ENCODE measurements at regions of chr1 and their contacts with region 1.

Region 1: DNA sequence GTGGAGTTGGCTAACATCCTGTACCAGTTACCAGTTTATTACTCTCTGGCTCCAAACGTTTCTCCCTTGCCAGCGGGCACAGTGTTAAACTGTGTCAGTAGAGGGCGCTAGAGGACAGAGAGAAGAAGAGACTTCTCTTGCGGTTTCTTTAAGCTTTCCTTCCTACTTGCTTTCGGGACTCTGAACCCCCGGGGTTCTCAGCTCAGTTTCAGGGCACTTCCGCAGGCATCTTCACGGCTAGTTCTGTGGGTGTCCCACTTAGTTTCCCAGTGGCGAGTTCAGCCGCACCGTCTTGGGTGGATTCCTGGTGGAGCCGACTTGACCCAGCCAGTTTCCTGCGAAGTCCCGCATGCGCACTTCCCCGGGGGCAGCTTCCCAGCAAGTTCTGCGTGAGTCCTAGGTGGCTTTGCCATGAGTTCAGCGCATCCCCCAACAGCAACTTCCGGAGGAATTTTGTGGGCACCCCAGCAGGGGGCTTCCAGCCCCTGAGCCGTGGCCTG is 37.9 kb upstream of the BTG2 start:
- DNase-seq: peak; percentile 86
- ATAC-seq: peak; percentile 58
- H3K4me3 Mint-ChIP-seq: peak overlapping the region; percentile 76
- H3K27ac Mint-ChIP-seq: no peak overlapping the region; the same call in 1 of the 2 replicates
- H3K4me1 Mint-ChIP-seq: peaks cover 11% of the 10 kb centered on the region
- H3K27me3 Mint-ChIP-seq: peaks cover 10% of the 10 kb centered on the region
- CTCF ChIP-seq: peak; percentile 85

Region 2: GRCh38 chr1:203046984-203047630 is 220.3 kb before region 1 on chr1:
- CTCF ChIA-PET with region 1: interaction called, 369 read pairs
- POLR2A ChIA-PET with region 1: no interaction called
- DNase-seq: no peak
- ATAC-seq: no peak
- H3K4me3 Mint-ChIP-seq: no peak overlapping the region
- H3K27ac Mint-ChIP-seq: no peak overlapping the region
- H3K4me1 Mint-ChIP-seq: peaks cover 20% of the 10 kb centered on the region
- H3K27me3 Mint-ChIP-seq: no peaks in the 10 kb centered on the region; the same call in 1 of the 2 replicates
- CTCF ChIP-seq: no peak

Region 3: DNA sequence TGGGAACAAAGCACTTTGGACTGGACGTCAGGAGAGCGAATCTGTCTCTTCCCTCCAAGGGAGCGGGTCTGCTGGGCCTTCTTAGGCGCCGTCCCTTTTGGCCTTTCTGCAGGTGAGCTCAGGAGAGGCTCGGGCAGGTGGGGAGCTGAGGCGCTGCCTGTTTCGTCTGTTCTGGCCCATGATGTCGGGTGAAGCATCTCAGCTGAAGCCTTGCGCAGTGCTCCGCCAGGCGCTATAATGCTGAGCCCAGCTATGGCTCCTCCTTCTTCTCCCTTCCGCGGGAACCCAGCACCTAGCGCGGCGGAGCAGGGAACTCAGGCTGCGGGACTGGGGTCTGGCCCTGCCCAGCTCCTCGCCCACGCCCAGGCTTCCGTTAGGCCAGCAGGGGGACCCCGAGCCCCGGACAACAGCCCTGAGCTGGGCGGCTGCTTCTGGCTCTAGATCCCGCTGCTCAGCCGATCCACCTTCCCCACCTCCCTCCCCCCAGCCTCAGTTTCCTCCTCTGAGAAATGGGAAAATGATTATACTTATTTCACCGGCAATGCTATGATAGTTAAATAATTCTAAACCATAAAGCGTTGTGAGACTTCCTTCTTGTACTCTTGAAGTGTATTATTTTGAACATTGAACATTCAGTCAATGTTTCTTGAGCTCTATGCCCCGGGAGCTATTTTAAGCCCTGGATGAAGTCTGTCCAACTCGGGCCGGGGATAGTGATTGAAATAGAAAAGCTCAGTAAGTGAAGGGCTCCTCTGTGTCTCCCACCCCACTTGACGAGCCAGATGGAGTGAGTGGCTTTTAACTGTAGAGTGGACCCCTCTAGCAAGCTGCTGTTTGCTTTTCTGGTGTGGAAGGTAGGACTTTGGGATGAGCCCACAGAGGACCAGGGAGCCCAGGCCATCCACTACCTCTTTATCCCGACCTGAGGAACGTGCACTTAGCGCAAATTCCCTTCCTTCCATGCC is 149.5 kb before region 1 on chr1:
- CTCF ChIA-PET with region 1: interaction called, 146 read pairs
- POLR2A ChIA-PET with region 1: interaction called, 3 read pairs
- DNase-seq: peak; percentile 95
- ATAC-seq: peak; percentile 100
- H3K4me3 Mint-ChIP-seq: peak overlapping the region; percentile 47
- H3K27ac Mint-ChIP-seq: no peak overlapping the region
- H3K4me1 Mint-ChIP-seq: no peaks in the 10 kb centered on the region; the same call in 1 of the 2 replicates
- H3K27me3 Mint-ChIP-seq: peaks cover 17% of the 10 kb centered on the region
- CTCF ChIP-seq: peak; percentile 66

Region 4: GRCh38 chr1:203177470-203178039 is 89.8 kb before region 1 on chr1:
- CTCF ChIA-PET with region 1: interaction called, 26 read pairs
- POLR2A ChIA-PET with region 1: no interaction called
- DNase-seq: no peak
- ATAC-seq: no peak
- H3K4me3 Mint-ChIP-seq: no peak overlapping the region
- H3K27ac Mint-ChIP-seq: no peak overlapping the region
- H3K4me1 Mint-ChIP-seq: peaks cover 21% of the 10 kb centered on the region
- H3K27me3 Mint-ChIP-seq: no peaks in the 10 kb centered on the region
- CTCF ChIP-seq: no peak

Region 5: DNA sequence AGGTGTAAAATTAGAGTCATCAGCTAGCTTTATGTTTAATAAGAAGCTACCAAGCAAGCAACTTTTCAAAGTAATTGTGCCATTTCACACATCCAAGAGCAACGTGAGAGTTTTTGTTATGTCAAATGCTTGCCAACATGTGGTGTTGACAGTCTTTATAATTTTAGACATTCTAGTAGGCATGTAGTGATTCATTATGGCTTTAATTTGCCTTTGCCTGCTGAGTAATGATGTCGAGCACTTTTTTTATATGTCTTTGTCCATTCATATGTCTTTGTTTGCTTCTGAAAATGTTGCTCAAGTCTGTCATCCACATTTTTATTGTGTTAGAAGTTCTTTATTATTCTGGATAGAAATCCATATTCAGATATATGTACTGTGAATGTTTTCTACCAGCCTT is 16.5 kb before region 1 on chr1:
- CTCF ChIA-PET with region 1: interaction called, 16 read pairs
- POLR2A ChIA-PET with region 1: no interaction called
- DNase-seq: no peak
- ATAC-seq: no peak
- H3K4me3 Mint-ChIP-seq: no peak overlapping the region
- H3K27ac Mint-ChIP-seq: no peak overlapping the region
- H3K4me1 Mint-ChIP-seq: no peaks in the 10 kb centered on the region
- H3K27me3 Mint-ChIP-seq: peaks cover 25% of the 10 kb centered on the region
- CTCF ChIP-seq: no peak

Region 6: DNA sequence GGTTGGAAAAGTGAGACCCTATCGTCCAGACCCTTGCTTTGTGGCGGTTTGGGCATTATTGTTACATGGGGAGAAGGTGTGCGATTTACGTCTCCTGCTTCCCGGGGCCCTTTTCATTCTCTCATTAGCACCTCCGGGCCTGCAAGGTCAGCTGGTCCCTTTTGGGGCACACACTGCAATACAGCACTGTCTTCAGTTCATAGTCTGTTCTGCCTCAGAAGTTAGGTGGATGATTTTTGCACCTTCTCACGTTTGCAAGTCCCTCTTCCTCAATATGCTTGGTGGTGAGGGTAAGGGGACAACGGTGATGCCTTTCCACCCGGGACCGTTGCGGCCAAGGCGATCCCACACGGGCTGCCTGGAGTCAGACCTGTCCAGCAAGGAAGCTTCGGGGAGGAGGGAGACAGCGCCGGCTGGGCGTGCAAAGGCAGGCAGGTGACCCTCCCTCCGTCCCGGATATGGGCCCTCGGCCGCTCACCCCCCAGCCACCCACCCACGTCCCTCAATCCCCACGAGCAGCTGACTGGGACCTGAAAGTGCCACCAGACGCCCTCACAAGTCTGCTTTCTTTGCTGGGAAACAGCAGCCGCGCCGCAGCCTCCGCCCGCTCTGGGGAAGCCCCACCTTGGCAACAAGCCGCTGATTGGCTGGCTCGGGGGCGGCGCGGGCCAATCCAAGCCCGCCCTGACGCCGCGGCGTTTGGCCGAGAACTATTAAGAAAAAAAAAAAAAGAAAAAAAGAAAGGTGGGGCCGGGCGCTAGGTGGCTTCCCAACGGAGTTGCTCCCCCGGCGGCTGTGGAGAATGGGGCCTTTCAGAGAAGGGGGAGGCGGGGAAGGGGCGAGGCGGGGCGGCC is 59.7 kb after region 1 on chr1:
- CTCF ChIA-PET with region 1: interaction called, 99 read pairs
- POLR2A ChIA-PET with region 1: no interaction called
- DNase-seq: peak; percentile 91
- ATAC-seq: peak; percentile 85
- H3K4me3 Mint-ChIP-seq: peak overlapping the region; percentile 69
- H3K27ac Mint-ChIP-seq: no peak overlapping the region
- H3K4me1 Mint-ChIP-seq: peaks cover 50% of the 10 kb centered on the region
- H3K27me3 Mint-ChIP-seq: peaks cover 62% of the 10 kb centered on the region
- CTCF ChIP-seq: no peak

Region 7: GRCh38 chr1:203486618-203487370 is 219.4 kb after region 1 on chr1:
- CTCF ChIA-PET with region 1: interaction called, 33 read pairs
- POLR2A ChIA-PET with region 1: interaction called, 3 read pairs
- DNase-seq: no peak
- ATAC-seq: no peak
- H3K4me3 Mint-ChIP-seq: peak overlapping the region; percentile 72
- H3K27ac Mint-ChIP-seq: peak overlapping the region; percentile 45
- H3K4me1 Mint-ChIP-seq: peaks cover 14% of the 10 kb centered on the region
- H3K27me3 Mint-ChIP-seq: peaks cover 7% of the 10 kb centered on the region; the same call in 1 of the 2 replicates
- CTCF ChIP-seq: no peak